CD4-positive, alpha-beta T cell (primary cell): ENCODE measurements at regions of chr12 and their contacts with region 1.

Region 1: GRCh38 chr12:70255311-70255710 is 12.1 kb downstream of the CNOT2 start:
- DNase-seq: no peak
- ATAC-seq: no peak
- H3K4me3 ChIP-seq: no peak overlapping the region
- H3K4me3 Mint-ChIP-seq: peak overlapping the region; percentile 56
- H3K27ac ChIP-seq: no peak overlapping the region
- H3K27ac Mint-ChIP-seq: peak overlapping the region; percentile 40
- H3K4me1 ChIP-seq: peaks cover 3% of the 10 kb centered on the region
- H3K4me1 Mint-ChIP-seq: peaks cover 88% of the 10 kb centered on the region
- H3K27me3 ChIP-seq: no peaks in the 10 kb centered on the region
- H3K27me3 Mint-ChIP-seq: no peaks in the 10 kb centered on the region
- CTCF ChIP-seq: no peak

Region 2: DNA sequence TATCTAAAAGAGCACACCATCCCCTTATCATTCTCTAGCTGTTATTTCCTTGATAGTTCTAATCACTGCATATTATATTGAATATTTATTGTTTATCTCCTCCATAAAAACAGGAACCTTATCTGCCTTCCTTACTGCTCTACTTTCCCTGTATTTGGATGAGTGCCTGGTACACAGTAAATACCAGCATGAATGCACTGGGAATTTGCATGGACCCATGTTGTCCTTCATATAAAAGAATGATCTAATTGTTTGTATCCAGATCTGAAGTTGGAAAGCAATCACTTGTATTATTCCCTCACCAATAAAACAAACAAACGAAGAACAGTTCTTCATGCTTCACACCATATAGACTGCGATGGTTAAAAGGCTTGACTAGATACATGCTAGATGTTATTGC is 27.4 kb before region 1 on chr12:
- CTCF ChIA-PET with region 1: no interaction called
- POLR2A ChIA-PET with region 1: no interaction called
- intact Hi-C with region 1: no loop called
- DNase-seq: no peak
- ATAC-seq: no peak
- H3K4me3 ChIP-seq: no peak overlapping the region
- H3K4me3 Mint-ChIP-seq: no peak overlapping the region
- H3K27ac ChIP-seq: no peak overlapping the region
- H3K27ac Mint-ChIP-seq: no peak overlapping the region
- H3K4me1 ChIP-seq: no peaks in the 10 kb centered on the region
- H3K4me1 Mint-ChIP-seq: no peaks in the 10 kb centered on the region
- H3K27me3 ChIP-seq: no peaks in the 10 kb centered on the region
- H3K27me3 Mint-ChIP-seq: no peaks in the 10 kb centered on the region
- CTCF ChIP-seq: no peak

Region 3: DNA sequence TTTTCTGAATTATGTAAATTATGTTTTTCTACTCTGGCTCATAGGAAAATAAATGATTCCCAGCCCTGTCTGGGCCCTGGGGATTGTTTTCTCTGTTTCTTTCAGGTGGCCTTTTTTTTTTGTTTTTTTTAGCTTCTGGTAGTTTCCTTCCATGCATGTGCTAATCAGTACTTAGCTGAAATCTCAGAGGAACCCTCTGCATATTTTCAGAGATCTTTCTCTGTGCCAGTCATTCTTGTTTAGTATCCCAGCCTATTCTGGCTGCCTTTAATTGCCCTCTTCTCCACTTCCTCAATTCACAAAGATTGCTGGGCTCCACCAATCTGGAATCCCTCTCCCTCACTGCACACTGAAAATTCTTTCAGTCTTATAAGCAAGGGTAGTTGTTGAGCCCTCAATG is 34.8 kb after region 1 on chr12:
- CTCF ChIA-PET with region 1: no interaction called
- POLR2A ChIA-PET with region 1: no interaction called
- intact Hi-C with region 1: loop called in 1 of 2 experiments (anchors 5 kb)
- DNase-seq: no peak
- ATAC-seq: no peak
- H3K4me3 ChIP-seq: no peak overlapping the region
- H3K4me3 Mint-ChIP-seq: no peak overlapping the region
- H3K27ac ChIP-seq: no peak overlapping the region
- H3K27ac Mint-ChIP-seq: no peak overlapping the region
- H3K4me1 ChIP-seq: no peaks in the 10 kb centered on the region
- H3K4me1 Mint-ChIP-seq: peaks cover 71% of the 10 kb centered on the region
- H3K27me3 ChIP-seq: no peaks in the 10 kb centered on the region
- H3K27me3 Mint-ChIP-seq: no peaks in the 10 kb centered on the region
- CTCF ChIP-seq: no peak